Activated naive CD4-positive, alpha-beta T cell treated with anti-CD3 and anti-CD28 coated beads, Interleukin-2, amount 10 ng/mL, durations not matched to agents 7 days and 5 days (primary cell): ENCODE measurements at regions of chr1 and their contacts with region 1.

Region 1: DNA sequence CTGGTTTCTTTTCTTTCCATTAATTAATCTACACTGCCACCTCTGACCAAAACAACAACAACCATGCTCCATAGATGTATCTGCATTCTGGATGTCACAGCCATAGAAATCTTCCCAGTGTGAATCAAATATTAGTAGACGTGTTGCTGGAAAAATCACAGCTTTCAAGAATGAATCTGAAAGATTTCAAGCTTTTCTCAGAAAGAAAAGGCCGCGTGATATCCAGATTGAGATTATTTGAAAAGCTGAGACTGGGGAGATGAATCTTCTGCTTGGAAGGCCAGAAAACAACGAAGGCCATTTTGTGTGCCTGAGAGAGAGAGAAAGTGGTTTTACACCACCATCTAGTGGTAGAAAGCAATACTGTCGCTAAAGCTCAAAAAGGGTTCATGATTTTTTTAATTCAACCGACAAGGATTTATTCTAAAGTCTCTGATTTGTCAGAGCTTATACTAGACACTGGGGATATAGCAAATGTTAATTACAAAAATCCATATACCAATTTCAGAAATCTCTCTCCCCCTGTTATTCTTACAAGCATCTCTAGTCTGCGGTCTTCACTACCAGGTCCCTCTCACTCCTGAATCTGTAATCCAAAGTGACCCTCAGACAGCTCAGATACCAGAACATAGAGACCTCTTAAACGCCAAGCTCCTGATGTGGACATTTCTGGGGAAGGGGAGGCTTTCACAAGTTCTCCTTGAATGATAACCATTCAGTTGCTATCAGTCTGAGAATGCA is 87.5 kb upstream of the SGIP1 start:
- DNase-seq: peak; percentile 50
- H3K4me3 Mint-ChIP-seq: peak overlapping the region; percentile 69
- H3K27ac Mint-ChIP-seq: peak overlapping the region; percentile 96
- H3K4me1 Mint-ChIP-seq: peaks cover 31% of the 10 kb centered on the region
- H3K27me3 Mint-ChIP-seq: peaks cover 13% of the 10 kb centered on the region

Region 2: DNA sequence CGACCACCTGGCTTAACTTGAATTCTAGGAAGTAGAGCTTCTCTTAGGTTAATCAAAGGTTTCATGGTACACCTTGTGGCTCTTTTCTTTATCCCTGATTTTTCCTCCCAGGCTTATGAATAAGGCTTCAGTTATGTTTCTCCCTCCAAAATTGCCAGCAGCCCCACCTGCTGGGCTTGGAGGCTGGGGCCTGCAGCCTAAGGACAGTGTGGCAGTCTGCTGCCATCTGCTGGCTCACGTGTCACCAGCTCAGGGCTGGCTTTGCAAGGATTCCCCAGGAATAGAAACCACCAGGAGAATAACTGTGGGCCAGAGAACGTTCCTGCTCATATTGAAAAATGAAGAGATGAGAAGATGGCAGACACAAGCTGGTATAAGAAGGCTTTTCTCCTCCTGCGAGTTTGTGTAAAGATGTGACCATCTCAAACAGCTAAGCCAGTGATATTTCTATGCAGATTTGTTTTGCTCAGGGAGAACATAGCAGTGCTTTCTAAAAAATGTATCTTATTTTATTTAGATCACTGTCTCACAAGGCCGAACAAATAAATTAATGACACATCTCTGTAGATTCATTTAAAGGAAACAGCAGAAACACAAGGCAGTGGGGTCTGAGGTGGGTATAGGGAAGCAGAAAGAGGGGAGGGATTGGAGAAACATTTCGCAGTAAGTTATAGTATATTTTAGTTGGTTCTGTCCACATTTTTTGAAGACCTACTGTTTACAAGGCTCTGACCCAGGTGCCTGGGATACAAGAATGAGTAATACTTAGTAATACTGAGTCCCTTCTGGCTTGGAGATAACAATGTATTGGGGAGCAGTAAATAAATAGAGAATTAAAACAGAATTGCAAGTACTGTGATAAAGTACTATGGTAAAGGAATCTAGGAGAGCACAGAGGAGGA is 203.5 kb before region 1 on chr1:
- CTCF ChIA-PET with region 1: interaction called, 565 read pairs
- DNase-seq: peak; percentile 85
- H3K4me3 Mint-ChIP-seq: no peak overlapping the region
- H3K27ac Mint-ChIP-seq: no peak overlapping the region
- H3K4me1 Mint-ChIP-seq: peaks cover 3% of the 10 kb centered on the region
- H3K27me3 Mint-ChIP-seq: peaks cover 6% of the 10 kb centered on the region

Region 3: GRCh38 chr1:66274634-66275033 is 171.8 kb before region 1 on chr1:
- CTCF ChIA-PET with region 1: interaction called, 14 read pairs
- DNase-seq: no peak
- H3K4me3 Mint-ChIP-seq: no peak overlapping the region
- H3K27ac Mint-ChIP-seq: peak overlapping the region; percentile 90
- H3K4me1 Mint-ChIP-seq: peaks cover 90% of the 10 kb centered on the region
- H3K27me3 Mint-ChIP-seq: no peaks in the 10 kb centered on the region

Region 4: GRCh38 chr1:66331657-66332547 is 114.5 kb before region 1 on chr1:
- CTCF ChIA-PET with region 1: interaction called, 12 read pairs
- DNase-seq: peak; percentile 63
- H3K4me3 Mint-ChIP-seq: peak overlapping the region; percentile 98
- H3K27ac Mint-ChIP-seq: peak overlapping the region; percentile 98
- H3K4me1 Mint-ChIP-seq: peaks cover 48% of the 10 kb centered on the region
- H3K27me3 Mint-ChIP-seq: no peaks in the 10 kb centered on the region

Region 5: GRCh38 chr1:66350001-66350547 is 96.4 kb before region 1 on chr1:
- CTCF ChIA-PET with region 1: interaction called, 30 read pairs
- DNase-seq: peak; percentile 62
- H3K4me3 Mint-ChIP-seq: peak overlapping the region; percentile 75
- H3K27ac Mint-ChIP-seq: peak overlapping the region; percentile 95
- H3K4me1 Mint-ChIP-seq: peaks cover 95% of the 10 kb centered on the region
- H3K27me3 Mint-ChIP-seq: no peaks in the 10 kb centered on the region

Region 6: GRCh38 chr1:66374561-66375111 is 71.8 kb before region 1 on chr1:
- CTCF ChIA-PET with region 1: interaction called, 35 read pairs
- DNase-seq: no peak
- H3K4me3 Mint-ChIP-seq: peak overlapping the region; percentile 24
- H3K27ac Mint-ChIP-seq: peak overlapping the region; percentile 86
- H3K4me1 Mint-ChIP-seq: peaks cover 58% of the 10 kb centered on the region
- H3K27me3 Mint-ChIP-seq: no peaks in the 10 kb centered on the region

Region 7: GRCh38 chr1:66405061-66405460 is 41.4 kb before region 1 on chr1:
- CTCF ChIA-PET with region 1: no interaction called
- DNase-seq: no peak
- H3K4me3 Mint-ChIP-seq: no peak overlapping the region
- H3K27ac Mint-ChIP-seq: no peak overlapping the region
- H3K4me1 Mint-ChIP-seq: peaks cover 16% of the 10 kb centered on the region
- H3K27me3 Mint-ChIP-seq: no peaks in the 10 kb centered on the region